AG04449 (cell line): ENCODE measurements at regions of chr20 and their contacts with region 1.

Region 1: GRCh38 chr20:44388466-44389023 is 33.0 kb downstream of the HNF4A start:
- DNase-seq: peak; percentile 7
- H3K4me3 ChIP-seq: no peak overlapping the region
- CTCF ChIP-seq: peak; percentile 90

Region 2: DNA sequence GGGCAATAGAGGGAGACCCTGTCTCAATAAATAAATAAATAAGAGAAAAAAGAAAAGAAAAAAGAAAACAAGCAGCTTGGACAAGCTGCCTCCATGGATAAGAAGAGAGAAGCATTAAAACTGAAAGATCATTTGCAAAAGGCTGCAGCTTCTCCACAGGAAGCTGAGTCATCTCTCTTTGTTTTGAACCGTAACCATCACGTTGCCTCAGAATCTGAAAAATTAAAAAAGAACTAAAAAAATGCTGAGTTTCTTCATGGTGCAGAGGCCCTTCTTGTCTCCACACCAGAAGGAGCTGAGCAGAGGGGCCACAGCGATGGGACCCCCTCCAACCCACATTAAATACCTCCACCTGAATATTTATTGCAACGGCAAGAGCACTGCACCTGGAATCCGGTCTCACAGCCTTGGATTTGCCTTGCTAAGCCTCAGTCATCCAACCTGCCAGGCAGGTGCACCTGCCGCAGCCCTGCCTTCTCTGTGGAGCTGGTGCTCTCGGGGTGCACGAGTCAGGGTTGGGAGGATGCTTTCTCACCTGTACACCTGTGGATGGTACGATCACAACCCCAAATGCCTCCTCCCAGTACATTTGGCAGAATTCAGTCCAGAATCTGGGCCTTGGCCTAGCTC is 445.8 kb before region 1 on chr20:
- CTCF ChIA-PET with region 1: no interaction called
- POLR2A ChIA-PET with region 1: no interaction called
- DNase-seq: peak; percentile 37
- H3K4me3 ChIP-seq: no peak overlapping the region
- CTCF ChIP-seq: no peak

Region 3: GRCh38 chr20:44217342-44218092 is 171.0 kb before region 1 on chr20:
- CTCF ChIA-PET with region 1: interaction called, 170 read pairs
- POLR2A ChIA-PET with region 1: no interaction called
- DNase-seq: no peak
- H3K4me3 ChIP-seq: no peak overlapping the region
- CTCF ChIP-seq: peak; percentile 85

Region 4: GRCh38 chr20:44370639-44371220 is 17.8 kb before region 1 on chr20:
- CTCF ChIA-PET with region 1: interaction called, 29 read pairs
- POLR2A ChIA-PET with region 1: no interaction called
- DNase-seq: no peak
- H3K4me3 ChIP-seq: no peak overlapping the region
- CTCF ChIP-seq: no peak

Region 5: GRCh38 chr20:44407402-44408184 is 19.0 kb after region 1 on chr20:
- CTCF ChIA-PET with region 1: interaction called, 13 read pairs
- POLR2A ChIA-PET with region 1: no interaction called
- DNase-seq: peak; percentile 16
- H3K4me3 ChIP-seq: no peak overlapping the region
- CTCF ChIP-seq: no peak

Region 6: GRCh38 chr20:44460795-44461141 is 72.2 kb after region 1 on chr20:
- CTCF ChIA-PET with region 1: interaction called, 98 read pairs
- POLR2A ChIA-PET with region 1: no interaction called
- DNase-seq: no peak
- H3K4me3 ChIP-seq: no peak overlapping the region
- CTCF ChIP-seq: peak; percentile 9

Region 7: DNA sequence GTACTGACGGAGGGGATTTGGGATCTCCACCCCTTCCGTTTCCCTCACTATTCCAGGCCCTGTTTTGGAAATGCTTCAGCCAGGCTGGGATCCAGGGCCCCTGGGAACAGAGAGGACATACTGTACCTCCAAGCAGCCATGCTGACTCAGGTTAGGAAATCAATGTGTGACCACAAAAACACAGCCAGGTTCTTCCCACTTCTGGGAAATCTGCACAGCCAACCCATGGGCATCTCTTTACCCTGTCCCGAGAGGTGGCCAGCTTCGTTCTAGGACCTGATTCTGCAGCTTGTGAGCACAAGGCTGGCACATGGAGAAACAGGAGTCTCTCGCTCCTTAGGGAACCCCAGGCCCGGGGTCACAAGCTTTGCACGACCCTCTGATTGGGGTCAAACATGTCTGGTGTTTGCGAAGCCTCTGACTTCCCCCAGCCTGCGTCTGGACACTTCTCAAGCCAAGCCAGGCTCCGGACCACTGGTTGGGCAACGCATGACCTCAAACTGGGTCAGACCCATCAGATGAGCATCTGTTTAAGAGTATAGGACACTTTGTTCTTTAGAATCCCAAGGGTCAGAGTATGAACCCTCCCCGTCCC is 78.8 kb after region 1 on chr20:
- CTCF ChIA-PET with region 1: interaction called, 98 read pairs
- POLR2A ChIA-PET with region 1: no interaction called
- DNase-seq: no peak
- H3K4me3 ChIP-seq: no peak overlapping the region
- CTCF ChIP-seq: no peak

Region 8: DNA sequence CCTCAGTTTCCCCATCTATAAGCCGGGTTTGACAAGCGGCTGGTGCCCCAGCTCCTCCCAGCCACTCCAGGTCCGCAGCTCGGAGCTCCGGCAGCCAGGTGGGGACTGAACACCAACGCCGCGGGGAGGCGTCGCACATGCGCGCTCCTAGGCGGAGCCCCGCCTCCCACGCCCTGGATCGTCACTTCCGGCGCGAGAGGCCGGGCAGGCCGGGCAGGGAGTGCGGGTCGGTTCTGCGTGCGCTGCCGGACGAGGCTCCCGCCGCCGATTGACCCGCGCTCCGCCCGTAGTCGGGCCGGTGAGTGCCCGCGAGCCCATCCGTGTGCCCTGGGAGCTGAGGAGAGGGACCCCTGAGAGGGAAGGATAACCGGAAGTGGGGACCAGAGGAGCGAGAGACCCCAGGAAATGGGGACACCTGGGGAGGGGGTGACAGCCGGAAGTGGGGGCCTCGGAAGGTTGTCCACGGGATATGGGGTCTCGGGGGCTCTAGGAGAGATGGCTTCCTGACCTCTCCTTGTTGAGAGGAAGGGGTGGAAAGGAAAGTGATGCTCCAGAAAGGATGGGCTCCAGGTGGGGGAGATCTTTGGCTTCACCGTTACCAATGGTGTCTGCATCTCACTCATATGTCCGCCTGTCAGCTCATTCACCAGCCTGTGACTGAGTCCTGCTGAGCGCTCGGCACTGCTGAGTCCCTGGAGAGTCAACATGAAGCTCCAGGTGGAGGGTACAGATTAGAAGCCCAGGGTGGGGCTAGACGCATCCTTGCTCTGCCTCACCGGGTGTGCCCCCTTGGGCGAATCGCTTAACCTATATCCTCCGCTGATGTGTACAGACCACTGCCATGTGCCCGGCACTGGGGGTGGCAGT is 87.4 kb after region 1 on chr20 and contains the start of gene TTPAL:
- CTCF ChIA-PET with region 1: interaction called, 61 read pairs
- POLR2A ChIA-PET with region 1: interaction called, 4 read pairs
- DNase-seq: no peak
- H3K4me3 ChIP-seq: peak within 1 kb of the TSS; percentile 96
- CTCF ChIP-seq: peak; percentile 50

Region 9: DNA sequence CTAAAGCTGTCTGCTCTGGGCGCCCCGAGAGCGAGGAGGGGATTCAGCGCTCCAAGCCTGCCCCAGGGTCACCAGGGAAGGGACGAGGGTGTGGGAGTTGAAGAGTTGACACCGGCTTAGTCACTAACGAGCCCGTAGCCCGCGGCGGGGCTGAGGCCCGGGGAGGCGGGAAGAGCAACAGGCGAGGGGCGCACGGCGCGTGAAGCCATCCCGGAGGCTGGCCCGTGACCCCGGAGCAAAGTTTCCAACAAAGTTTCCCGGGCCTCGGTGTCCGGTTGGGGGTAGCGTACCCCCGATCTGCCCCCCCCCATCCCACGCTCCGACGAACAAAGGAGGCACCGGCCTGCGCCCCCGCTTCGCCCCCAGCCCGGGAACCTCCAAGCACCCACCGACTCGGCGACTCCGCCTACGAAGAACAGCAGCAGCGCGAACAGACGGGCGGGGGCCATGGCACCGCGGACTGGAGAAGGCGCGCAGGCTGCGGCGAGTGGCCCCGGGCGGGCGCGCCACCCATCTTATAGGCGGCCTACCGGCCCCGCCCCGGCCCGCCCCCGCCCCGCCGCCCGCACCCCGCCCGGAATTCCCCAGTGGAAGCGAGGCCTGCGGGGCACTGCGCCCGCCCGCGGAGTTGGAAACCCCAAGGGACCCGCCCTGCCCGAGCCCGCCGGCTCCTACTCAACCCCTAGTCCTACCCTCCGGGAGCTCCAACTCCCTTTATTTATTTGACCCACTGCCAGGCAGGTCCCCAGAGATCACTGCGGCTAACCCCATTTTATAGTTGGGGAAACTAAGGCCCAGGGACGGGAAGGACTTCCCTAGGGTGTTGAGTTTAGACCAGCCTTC is 959.6 kb after region 1 on chr20 and contains the start of gene SDC4:
- CTCF ChIA-PET with region 1: no interaction called
- POLR2A ChIA-PET with region 1: no interaction called
- DNase-seq: no peak
- H3K4me3 ChIP-seq: peak within 1 kb of the TSS; percentile 84
- CTCF ChIP-seq: no peak